Activated CD8-positive, alpha-beta T cell treated with anti-CD3 and anti-CD28 coated beads for 36 hours (primary cell): ENCODE measurements at regions of chr4 and their contacts with region 1.

Region 1: DNA sequence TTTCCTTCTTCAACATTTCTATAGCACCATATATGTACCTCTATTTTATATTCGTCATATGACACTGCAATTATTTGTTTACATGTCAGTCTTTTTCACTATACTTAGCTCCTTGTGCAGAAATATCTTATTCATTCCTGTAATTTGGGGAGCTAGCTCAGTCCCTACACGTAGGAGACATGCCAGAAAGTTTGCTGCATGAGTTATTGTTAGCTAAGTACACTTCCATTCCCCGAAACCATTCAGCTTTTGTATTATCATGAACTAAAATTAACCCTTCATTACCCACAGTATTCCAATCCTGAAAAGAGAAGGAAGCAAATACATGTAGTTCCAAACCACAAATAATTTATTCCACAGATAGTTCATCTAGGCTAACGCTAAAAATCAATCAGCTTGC is 10.2 kb downstream of the CBR4 start:
- DNase-seq: no peak
- ATAC-seq: no peak
- H3K4me3 Mint-ChIP-seq: no peak overlapping the region
- H3K27ac Mint-ChIP-seq: no peak overlapping the region
- H3K4me1 Mint-ChIP-seq: peaks cover 10% of the 10 kb centered on the region
- H3K27me3 Mint-ChIP-seq: no peaks in the 10 kb centered on the region
- CTCF ChIP-seq: no peak

Region 2: GRCh38 chr4:169010125-169011023 is 10.6 kb after region 1 on chr4 and contains the start of gene CBR4:
- CTCF ChIA-PET with region 1: interaction called, 17 read pairs
- POLR2A ChIA-PET with region 1: interaction called, 3 read pairs
- intact Hi-C with region 1: no loop called
- DNase-seq: peak; percentile 98
- ATAC-seq: peak; percentile 98
- H3K4me3 Mint-ChIP-seq: peak within 1 kb of the TSS; percentile 85
- H3K27ac Mint-ChIP-seq: peak within 1 kb of the TSS; percentile 87
- H3K4me1 Mint-ChIP-seq: peaks cover 32% of the 10 kb centered on the region
- H3K27me3 Mint-ChIP-seq: no peaks in the 10 kb centered on the region
- CTCF ChIP-seq: peak; percentile 8
- total RNA-seq, gene CBR4: 25.8 to 26.8 TPM